ENCODE measurements at regions of chr17 and their contacts with region 1.

Region 1: DNA sequence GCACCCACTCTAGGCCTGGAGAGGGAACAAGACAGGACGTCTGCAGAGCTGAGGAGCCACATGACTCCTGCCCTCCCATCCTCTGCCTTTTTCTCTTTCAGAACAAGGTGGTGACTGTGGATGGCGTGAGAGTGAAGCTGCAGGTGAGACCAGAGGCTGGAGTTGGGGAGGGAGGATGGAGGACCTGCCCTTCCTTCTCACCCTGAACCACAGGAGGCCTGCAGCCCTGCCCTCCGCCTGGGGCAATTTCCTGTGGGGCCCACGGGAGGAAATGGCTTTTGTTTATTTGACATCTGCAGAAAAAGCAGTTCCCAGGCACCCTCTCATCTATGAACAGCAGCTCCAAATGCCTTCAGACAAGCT is 5.1 kb downstream of the RAB37 start:
- DNase-seq: peak; percentile 77
- ATAC-seq: peak; percentile 11
- H3K4me3 Mint-ChIP-seq: peak overlapping the region; percentile 5
- H3K27ac Mint-ChIP-seq: peak overlapping the region; percentile 88
- H3K4me1 Mint-ChIP-seq: peaks cover 80% of the 10 kb centered on the region
- H3K27me3 Mint-ChIP-seq: no peaks in the 10 kb centered on the region
- CTCF ChIP-seq: no peak

Region 2: GRCh38 chr17:74770498-74771318 is 28.6 kb after region 1 on chr17:
- CTCF ChIA-PET with region 1: interaction called, 110 read pairs
- POLR2A ChIA-PET with region 1: interaction called, 11 read pairs
- intact Hi-C with region 1: no loop called
- DNase-seq: peak; percentile 78
- ATAC-seq: peak; percentile 88
- H3K4me3 Mint-ChIP-seq: no peak overlapping the region
- H3K27ac Mint-ChIP-seq: peak overlapping the region; percentile 72
- H3K4me1 Mint-ChIP-seq: peaks cover 30% of the 10 kb centered on the region
- H3K27me3 Mint-ChIP-seq: no peaks in the 10 kb centered on the region
- CTCF ChIP-seq: peak; percentile 76